IMR-90 (cell line): ENCODE measurements at regions of chr3 and their contacts with region 1.

Region 1: DNA sequence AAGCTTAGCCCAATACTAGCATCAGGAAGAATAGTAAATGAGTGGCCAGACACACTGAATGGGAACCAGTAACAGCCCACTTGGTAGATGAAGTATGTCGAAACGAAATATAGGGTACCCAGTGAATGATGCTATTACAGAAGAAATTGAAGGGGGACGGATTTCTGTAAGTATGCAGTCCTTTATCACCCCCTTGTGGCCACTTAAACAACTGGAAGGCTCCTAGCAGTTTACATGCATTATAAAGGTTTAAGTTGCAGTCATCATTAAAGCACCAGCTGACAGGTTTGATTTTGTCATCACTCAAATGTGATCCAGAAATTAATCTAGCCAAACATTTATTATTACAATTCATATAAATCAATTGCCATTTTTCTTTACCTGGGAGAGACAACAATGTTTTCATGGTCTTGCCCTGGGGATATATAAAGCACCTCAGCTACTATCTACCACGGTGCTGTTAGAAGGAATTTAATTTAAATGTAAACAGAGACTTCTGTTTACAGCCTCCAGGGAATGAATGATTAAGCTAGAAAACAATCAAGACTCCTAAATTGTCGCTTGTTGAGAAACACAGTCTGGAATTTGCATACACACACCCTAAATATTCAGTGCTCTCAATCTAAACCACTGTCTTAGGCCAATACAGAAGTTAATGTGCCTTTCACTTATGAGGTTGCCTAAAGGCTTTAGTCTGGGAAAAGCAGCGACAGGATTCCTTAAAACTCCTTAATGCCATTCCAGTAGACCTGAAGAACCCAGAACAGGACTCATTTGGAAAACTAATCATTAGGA is 7.8 kb downstream of the EIF1B start:
- DNase-seq: peak; percentile 71
- ATAC-seq: peak; percentile 79
- H3K4me3 ChIP-seq: no peak overlapping the region
- H3K27ac ChIP-seq: no peak overlapping the region
- H3K4me1 ChIP-seq: no peaks in the 10 kb centered on the region
- H3K27me3 ChIP-seq: 0 out of 2 replicates have a peak, but pooled peaks cover 2% of the 10 kb centered on the region
- CTCF ChIP-seq: peak; percentile 88
- POLR2A ChIP-seq: no peak
- RAD21 ChIP-seq: peak; percentile 86

Region 2: DNA sequence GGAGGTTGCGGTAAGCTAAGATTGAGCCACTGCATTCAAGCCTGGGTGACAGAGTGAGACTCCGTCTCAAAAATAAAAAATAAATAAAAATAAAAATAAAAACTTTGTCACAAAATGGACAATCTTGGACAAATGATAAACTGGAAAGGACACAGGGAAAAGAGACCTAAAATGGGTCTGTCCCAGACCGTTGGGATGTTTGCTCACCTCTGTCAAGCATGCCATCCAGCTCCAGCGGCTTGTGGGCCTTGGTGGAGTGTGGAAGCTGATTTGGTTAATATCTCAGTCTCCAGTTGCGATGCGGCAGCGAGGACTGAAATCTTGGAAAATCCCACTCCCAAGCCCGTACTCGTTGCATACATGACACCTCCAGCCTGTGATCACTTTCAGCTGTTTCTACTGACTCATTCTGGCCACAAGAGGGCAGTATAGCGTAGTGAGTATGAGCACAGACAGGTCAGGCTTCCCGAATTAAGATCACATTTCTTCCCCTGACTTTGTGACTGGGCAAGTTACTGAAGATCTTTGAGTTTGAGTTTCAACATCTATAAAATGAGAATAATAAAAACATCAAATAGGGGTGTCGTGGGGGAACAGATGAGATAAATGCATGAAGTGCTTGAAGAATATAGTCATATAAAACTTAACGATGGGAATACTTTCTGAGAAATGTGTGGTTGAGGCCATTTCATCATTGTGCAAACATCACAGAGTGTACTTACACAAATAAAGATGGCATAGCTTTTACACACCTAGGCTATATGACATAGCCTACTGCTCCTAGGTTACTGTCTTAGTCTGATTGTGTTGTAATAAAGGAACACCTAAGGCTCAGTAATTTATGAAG is 869.4 kb before region 1 on chr3:
- CTCF ChIA-PET with region 1: no interaction called
- POLR2A ChIA-PET with region 1: no interaction called
- dilution Hi-C with region 1: no loop called
- in situ Hi-C with region 1: no loop called
- intact Hi-C with region 1: loop called (anchors 5 kb)
- DNase-seq: peak; percentile 82
- ATAC-seq: peak; percentile 100
- H3K4me3 ChIP-seq: no peak overlapping the region
- H3K27ac ChIP-seq: no peak overlapping the region
- H3K4me1 ChIP-seq: no peaks in the 10 kb centered on the region
- H3K27me3 ChIP-seq: peaks cover 6% of the 10 kb centered on the region; the same call in 1 of the 2 replicates
- CTCF ChIP-seq: peak; percentile 87
- POLR2A ChIP-seq: no peak
- RAD21 ChIP-seq: peak; percentile 65

Region 3: GRCh38 chr3:39639344-39640236 is 677.7 kb before region 1 on chr3:
- CTCF ChIA-PET with region 1: no interaction called
- POLR2A ChIA-PET with region 1: no interaction called
- dilution Hi-C with region 1: no loop called
- in situ Hi-C with region 1: no loop called
- intact Hi-C with region 1: loop called (anchors 10 kb)
- DNase-seq: peak; percentile 96
- ATAC-seq: peak; percentile 96
- H3K4me3 ChIP-seq: no peak overlapping the region
- H3K27ac ChIP-seq: no peak overlapping the region
- H3K4me1 ChIP-seq: peaks cover 2% of the 10 kb centered on the region
- H3K27me3 ChIP-seq: no peaks in the 10 kb centered on the region
- CTCF ChIP-seq: no peak
- POLR2A ChIP-seq: no peak
- RAD21 ChIP-seq: no peak

Region 4: DNA sequence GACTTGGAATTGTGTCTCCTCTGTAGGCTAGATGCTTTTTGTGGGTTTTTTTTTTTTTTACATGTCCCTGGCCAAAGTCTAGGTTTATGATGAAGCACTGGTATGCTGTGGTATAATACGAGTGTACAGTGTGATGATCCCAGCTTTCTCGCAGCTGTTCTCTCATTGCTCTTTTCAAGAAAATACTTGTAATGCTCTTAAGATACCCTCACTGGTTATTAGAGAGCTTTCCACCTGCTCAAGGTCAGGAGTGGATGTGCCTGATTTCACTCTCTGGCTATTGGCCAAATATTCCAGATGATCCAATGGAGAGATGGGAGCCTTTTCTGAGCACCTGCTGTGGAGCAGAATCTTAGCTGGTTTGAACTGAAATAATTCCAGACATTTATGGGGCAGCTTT is 292.7 kb before region 1 on chr3:
- CTCF ChIA-PET with region 1: no interaction called
- POLR2A ChIA-PET with region 1: no interaction called
- dilution Hi-C with region 1: no loop called
- in situ Hi-C with region 1: no loop called
- intact Hi-C with region 1: no loop called
- DNase-seq: no peak
- ATAC-seq: no peak
- H3K4me3 ChIP-seq: no peak overlapping the region
- H3K27ac ChIP-seq: no peak overlapping the region
- H3K4me1 ChIP-seq: no peaks in the 10 kb centered on the region
- H3K27me3 ChIP-seq: no peaks in the 10 kb centered on the region
- CTCF ChIP-seq: no peak
- POLR2A ChIP-seq: no peak
- RAD21 ChIP-seq: no peak

Region 5: DNA sequence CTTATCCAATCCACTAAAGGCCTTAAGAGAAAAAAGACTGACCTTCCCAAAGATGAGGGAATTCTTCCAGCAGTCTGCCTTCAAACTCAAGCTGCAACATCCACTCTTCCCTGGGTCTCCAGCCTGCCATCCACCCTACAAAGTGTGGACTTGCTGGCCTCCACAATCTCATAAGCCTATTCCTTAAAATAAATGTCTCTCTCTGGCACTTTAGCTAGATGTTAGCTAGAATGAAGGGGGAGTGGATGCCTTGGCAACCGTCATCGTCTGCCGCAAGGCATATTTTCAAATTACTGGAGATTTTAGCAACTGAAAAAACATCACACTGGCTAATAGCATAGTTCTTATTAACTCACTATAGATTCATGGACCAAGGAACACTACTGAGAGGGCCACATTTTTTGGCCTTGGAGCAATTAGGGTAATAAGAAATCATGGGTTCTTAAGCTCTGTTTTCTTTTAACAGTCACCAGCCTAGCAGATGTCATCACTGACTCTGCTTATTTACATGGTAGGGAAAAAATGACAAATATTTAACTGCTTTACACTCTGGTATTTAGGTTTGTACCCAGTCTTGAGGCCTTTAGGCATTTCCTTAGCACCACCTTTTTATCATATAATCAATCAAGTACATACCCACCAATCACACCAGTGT is 262.6 kb before region 1 on chr3:
- CTCF ChIA-PET with region 1: no interaction called
- POLR2A ChIA-PET with region 1: no interaction called
- dilution Hi-C with region 1: no loop called
- in situ Hi-C with region 1: no loop called
- intact Hi-C with region 1: no loop called
- DNase-seq: no peak
- ATAC-seq: no peak
- H3K4me3 ChIP-seq: no peak overlapping the region
- H3K27ac ChIP-seq: no peak overlapping the region
- H3K4me1 ChIP-seq: no peaks in the 10 kb centered on the region
- H3K27me3 ChIP-seq: no peaks in the 10 kb centered on the region
- CTCF ChIP-seq: no peak
- POLR2A ChIP-seq: no peak
- RAD21 ChIP-seq: no peak

Region 6: GRCh38 chr3:40191850-40192448 is 125.3 kb before region 1 on chr3:
- CTCF ChIA-PET with region 1: interaction called, 55 read pairs
- POLR2A ChIA-PET with region 1: no interaction called
- dilution Hi-C with region 1: no loop called
- in situ Hi-C with region 1: loop called (anchors 5 kb)
- intact Hi-C with region 1: loop called (anchors 1 kb)
- DNase-seq: peak; percentile 51
- ATAC-seq: peak; percentile 99
- H3K4me3 ChIP-seq: no peak overlapping the region
- H3K27ac ChIP-seq: no peak overlapping the region
- H3K4me1 ChIP-seq: no peaks in the 10 kb centered on the region
- H3K27me3 ChIP-seq: no peaks in the 10 kb centered on the region; the same call in 1 of the 2 replicates
- CTCF ChIP-seq: peak; percentile 89
- POLR2A ChIP-seq: no peak
- RAD21 ChIP-seq: peak; percentile 85

Region 7: GRCh38 chr3:40211579-40211978 is 105.7 kb before region 1 on chr3:
- CTCF ChIA-PET with region 1: no interaction called
- POLR2A ChIA-PET with region 1: no interaction called
- dilution Hi-C with region 1: no loop called
- in situ Hi-C with region 1: no loop called
- intact Hi-C with region 1: no loop called
- DNase-seq: no peak
- ATAC-seq: no peak
- H3K4me3 ChIP-seq: no peak overlapping the region
- H3K27ac ChIP-seq: no peak overlapping the region
- H3K4me1 ChIP-seq: no peaks in the 10 kb centered on the region
- H3K27me3 ChIP-seq: no peaks in the 10 kb centered on the region
- CTCF ChIP-seq: no peak
- POLR2A ChIP-seq: no peak
- RAD21 ChIP-seq: no peak

Region 8: DNA sequence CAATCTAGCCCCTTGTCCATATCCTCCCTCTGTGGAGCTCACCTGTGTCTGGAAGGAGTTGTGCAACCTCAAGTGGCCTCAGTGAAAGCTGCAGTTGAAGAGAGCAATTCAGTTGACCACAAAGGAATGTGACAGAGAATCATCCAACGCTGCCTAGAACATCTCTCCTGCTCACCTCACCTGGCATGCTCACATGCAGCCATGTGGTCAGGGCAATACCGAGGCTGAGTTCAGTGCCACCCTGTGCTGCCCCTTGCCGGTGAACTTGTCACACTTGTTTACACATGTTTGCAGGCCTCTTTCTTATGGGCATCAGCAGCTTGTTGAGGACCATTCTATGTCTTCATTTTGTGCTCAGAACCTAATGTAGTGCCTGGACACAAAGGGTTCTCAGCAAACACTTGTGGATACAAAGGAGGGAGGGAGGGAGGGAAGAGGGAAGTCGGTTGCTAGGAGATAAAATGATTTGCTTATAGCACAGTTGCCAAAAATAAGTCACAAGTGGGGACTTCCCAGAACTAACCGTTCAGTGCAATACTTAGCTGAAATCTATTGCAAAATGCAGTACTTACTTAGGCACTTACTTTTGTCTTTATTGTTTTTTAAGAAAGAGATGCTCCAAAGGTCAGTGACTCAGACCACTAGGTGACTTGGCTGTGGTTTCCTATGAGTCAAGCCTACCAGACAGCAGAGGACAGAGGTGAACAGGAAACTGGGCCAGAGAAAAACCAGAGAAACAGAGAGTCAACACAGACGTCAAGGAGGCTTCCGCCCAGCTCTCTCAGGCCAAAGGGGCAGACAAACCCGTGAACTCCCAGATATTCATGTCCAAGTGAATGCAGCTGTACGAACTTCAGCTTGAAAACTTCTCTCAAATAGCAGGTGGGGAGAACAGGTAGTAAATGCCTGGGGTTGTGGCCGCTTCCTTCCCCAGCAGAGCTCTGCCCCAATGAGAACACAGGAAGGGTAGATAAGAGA is 654.2 kb after region 1 on chr3:
- CTCF ChIA-PET with region 1: no interaction called
- POLR2A ChIA-PET with region 1: no interaction called
- dilution Hi-C with region 1: no loop called
- in situ Hi-C with region 1: no loop called
- intact Hi-C with region 1: no loop called
- DNase-seq: peak; percentile 86
- ATAC-seq: no peak
- H3K4me3 ChIP-seq: no peak overlapping the region
- H3K27ac ChIP-seq: no peak overlapping the region
- H3K4me1 ChIP-seq: peaks cover 4% of the 10 kb centered on the region; the same call in 1 of the 2 replicates
- H3K27me3 ChIP-seq: no peaks in the 10 kb centered on the region
- CTCF ChIP-seq: no peak
- POLR2A ChIP-seq: no peak
- RAD21 ChIP-seq: no peak

Region 9: DNA sequence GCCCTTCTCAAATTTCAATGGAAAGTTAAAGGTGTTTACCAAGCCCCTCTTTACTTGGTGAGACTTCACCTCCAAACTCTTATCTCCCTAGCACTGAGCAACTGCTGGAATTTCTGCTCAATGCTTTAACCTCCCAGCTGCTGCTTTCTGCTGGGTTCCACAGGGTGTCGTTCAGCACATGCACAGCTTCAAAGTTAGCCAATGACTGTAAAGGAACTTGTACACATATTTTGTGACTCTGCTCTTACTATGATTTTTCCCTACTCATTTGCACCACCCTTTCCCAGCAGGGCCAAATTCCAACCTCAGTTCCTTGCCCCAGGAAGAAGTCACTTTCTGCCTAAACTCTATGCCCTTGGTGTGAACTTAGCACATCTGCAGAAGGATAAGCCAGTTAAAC is 1554.9 kb after region 1 on chr3:
- CTCF ChIA-PET with region 1: no interaction called
- POLR2A ChIA-PET with region 1: no interaction called
- dilution Hi-C with region 1: no loop called
- in situ Hi-C with region 1: loop called (anchors 10 kb)
- intact Hi-C with region 1: no loop called
- DNase-seq: peak; percentile 2
- ATAC-seq: no peak
- H3K4me3 ChIP-seq: no peak overlapping the region
- H3K27ac ChIP-seq: no peak overlapping the region
- H3K4me1 ChIP-seq: no peaks in the 10 kb centered on the region
- H3K27me3 ChIP-seq: no peaks in the 10 kb centered on the region
- CTCF ChIP-seq: no peak
- POLR2A ChIP-seq: no peak
- RAD21 ChIP-seq: no peak